ENCODE measurements at regions of chr9 and their contacts with region 1.

Region 1: GRCh38 chr9:5593904-5594303 is 35.0 kb upstream of the RIC1 start:
- DNase-seq: no peak
- H3K4me3 ChIP-seq: no peak overlapping the region
- H3K27ac ChIP-seq: no peak overlapping the region
- H3K4me1 ChIP-seq: no peaks in the 10 kb centered on the region
- H3K27me3 ChIP-seq: no peaks in the 10 kb centered on the region
- CTCF ChIP-seq: no peak
- POLR2A ChIP-seq: no peak

Region 2: DNA sequence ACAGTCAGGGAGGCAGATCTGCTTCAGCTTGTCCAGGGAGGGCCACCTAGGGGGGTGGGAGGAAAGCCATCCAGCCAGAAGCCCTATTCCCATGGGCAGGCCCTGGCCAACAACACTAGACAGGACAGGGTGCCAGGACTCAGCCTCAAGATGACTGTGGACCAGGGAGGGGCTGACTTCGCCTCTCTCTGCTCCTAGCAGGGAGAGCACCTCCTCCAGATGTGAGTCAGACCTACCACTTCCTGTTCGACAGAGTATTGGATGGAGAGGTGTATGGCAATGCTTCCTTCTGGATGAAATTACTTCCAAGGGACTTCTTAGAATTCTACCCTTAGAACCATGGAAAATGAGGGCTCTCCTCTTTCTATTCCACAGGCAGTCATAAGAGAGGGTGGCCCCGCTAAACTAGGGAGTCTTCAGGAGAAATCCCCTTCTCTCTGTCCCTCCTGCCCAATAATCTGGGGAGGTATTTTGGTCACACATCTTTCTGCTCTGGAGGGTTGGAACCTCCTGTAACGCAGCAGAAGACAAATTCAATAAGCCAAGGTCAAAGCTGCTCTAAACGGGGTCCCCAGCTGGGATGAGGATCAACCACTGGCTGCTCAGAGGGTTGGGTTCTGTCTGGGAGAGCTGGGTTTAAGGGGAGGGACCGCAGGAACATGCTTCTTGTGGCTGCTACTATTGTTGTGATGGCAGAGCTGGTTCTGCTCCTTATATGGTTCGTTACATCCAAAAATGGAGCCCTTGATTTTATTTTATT is 824.4 kb before region 1 on chr9:
- intact Hi-C with region 1: loop called (anchors 10 kb)
- DNase-seq: no peak
- H3K4me3 ChIP-seq: no peak overlapping the region
- H3K27ac ChIP-seq: no peak overlapping the region
- H3K4me1 ChIP-seq: no peaks in the 10 kb centered on the region
- H3K27me3 ChIP-seq: no peaks in the 10 kb centered on the region
- CTCF ChIP-seq: no peak
- POLR2A ChIP-seq: no peak

Region 3: DNA sequence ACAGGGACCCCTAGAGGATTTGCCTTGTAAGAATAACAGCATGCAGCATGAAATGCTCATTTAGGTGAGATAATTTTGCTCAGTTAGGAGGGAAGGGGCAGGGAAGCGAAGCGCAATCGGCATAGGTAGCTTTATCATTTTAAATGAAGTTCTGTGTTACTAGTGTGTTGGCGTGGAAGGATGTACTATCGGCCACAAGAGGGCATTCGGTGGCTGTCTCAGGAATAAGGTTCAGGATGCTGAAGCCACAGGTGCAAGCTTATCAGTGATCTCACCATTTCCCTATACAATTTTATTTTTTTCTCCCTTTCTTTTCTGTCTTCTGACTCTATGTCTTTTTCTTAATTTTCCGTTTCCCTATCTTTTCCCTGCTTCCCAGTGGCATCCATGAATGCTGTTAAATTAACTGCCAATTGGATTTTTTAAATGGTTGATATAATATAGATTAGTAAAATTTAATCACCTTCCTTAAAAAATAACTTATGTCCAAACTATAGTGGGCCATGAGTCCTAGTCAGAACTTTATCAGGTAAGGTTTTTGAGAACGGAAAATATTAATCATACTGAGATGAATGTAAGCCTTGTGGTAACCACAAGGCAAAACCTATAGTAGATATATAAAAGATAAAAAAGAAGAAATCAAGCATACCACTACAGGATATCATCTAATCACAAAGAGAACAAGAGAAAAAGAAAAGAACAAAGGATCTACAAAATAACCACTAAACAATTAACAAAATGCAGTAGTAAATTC is 407.3 kb before region 1 on chr9:
- intact Hi-C with region 1: loop called (anchors 5 kb)
- DNase-seq: peak; percentile 53 to 64
- H3K4me3 ChIP-seq: no peak overlapping the region
- H3K27ac ChIP-seq: no peak overlapping the region
- H3K4me1 ChIP-seq: no peaks in the 10 kb centered on the region
- H3K27me3 ChIP-seq: no peaks in the 10 kb centered on the region
- CTCF ChIP-seq: peak in 5 of 6 experiments; percentile 40 to 88 (median 51)
- POLR2A ChIP-seq: no peak

Region 4: GRCh38 chr9:5437254-5438216 is 156.4 kb before region 1 on chr9 and contains the start of gene PLGRKT:
- intact Hi-C with region 1: loop called (anchors 10 kb)
- DNase-seq: peak; percentile 97
- H3K4me3 ChIP-seq: peak within 1 kb of the TSS; percentile 29 to 53 (median 49)
- H3K27ac ChIP-seq: peak within 1 kb of the TSS; percentile 85 to 91 (median 91)
- H3K4me1 ChIP-seq: peaks cover 7 to 14% of the 10 kb centered on the region in 2 donors
- H3K27me3 ChIP-seq: no peaks in the 10 kb centered on the region
- CTCF ChIP-seq: peak in 3 of 6 experiments; percentile 20 to 31 (median 26)
- POLR2A ChIP-seq: peak in 1 of 2 donors; percentile 92
- total RNA-seq, gene PLGRKT: 16.2 to 32.7 (median 27.7) TPM

Measured in thyroid gland (tissue), 4 donors.